Breast epithelium (tissue), 4 donors: ENCODE measurements at regions of chr14 and their contacts with region 1.

Region 1: GRCh38 chr14:49193332-49194065 is 392.7 kb downstream of the RPS29 start:
- DNase-seq: no peak
- H3K4me3 ChIP-seq: no peak overlapping the region
- H3K27ac ChIP-seq: peak overlapping the region in 1 of 2 donors; percentile 19
- H3K4me1 ChIP-seq: no peaks in the 10 kb centered on the region
- H3K27me3 ChIP-seq: no peaks in the 10 kb centered on the region
- CTCF ChIP-seq: no peak
- POLR2A ChIP-seq: no peak

Region 2: GRCh38 chr14:48925184-48925583 is 268.3 kb before region 1 on chr14:
- intact Hi-C with region 1: loop called (anchors 5 kb)
- DNase-seq: no peak
- H3K4me3 ChIP-seq: no peak overlapping the region
- H3K27ac ChIP-seq: no peak overlapping the region
- H3K4me1 ChIP-seq: no peaks in the 10 kb centered on the region
- H3K27me3 ChIP-seq: no peaks in the 10 kb centered on the region
- CTCF ChIP-seq: no peak
- POLR2A ChIP-seq: no peak